Activated CD4-positive, alpha-beta T cell treated with anti-CD3 and anti-CD28 coated beads for 36 hours (primary cell): ENCODE measurements at regions of chr6 and their contacts with region 1.

Region 1: DNA sequence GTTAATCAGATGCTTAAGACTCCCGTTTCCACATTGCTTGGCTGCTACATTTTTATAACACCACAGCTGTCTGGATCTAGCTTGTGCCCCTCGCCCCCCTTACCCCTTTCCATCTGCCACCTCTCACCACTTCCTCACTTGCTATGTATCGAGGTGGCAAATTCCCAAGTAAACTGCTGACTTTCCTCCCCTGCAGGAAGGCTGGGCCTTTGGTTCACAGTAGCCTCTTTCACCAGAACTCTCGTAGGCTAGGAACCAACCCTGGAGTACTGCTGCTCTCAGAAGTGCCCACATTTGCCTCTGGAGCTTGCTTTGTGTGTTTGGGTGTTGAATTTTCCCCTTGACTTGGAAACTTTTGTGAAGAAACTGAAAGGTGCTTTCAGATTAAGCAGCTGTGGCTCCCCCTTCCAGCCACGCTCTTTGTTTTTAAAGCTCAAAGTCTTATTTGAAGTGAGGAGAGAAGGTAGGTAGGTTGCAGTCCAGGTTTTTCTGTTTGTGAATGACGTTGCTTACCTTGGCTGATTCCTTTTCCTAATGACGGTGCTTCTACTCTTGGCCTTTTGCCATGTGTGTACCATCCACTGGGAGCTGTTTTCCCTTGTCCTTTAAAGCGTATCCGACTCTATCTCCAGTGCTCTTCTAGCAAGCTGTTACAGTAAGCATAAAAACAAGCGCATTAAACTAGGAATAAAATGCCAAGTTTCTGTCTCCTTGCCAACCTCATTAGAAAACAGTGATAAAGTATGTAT is 90.4 kb downstream of the CARMIL1 start:
- DNase-seq: peak; percentile 34
- ATAC-seq: peak; percentile 7
- H3K4me3 Mint-ChIP-seq: peak overlapping the region; percentile 43
- H3K27ac Mint-ChIP-seq: peak overlapping the region; percentile 83
- H3K4me1 Mint-ChIP-seq: peaks cover 62% of the 10 kb centered on the region
- H3K27me3 Mint-ChIP-seq: no peaks in the 10 kb centered on the region

Region 2: DNA sequence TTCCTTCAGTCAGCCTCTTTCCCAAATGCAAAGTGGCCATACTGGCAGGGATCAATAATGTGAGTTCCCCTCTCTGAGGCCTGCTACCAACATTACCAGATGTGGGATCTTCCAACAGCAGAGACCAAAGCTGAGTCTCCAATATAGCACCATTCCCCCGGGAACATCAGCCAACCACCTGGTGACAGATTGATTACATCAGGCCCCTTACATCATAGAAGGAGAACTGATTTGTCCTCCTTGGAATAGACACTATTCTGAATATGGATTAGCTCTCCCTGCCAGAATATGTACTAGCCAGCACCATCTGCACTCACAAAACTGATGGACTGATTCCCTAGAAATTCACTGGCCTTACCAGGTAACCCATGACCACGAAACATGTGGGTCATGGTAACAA is 152.3 kb before region 1 on chr6:
- CTCF ChIA-PET with region 1: no interaction called
- POLR2A ChIA-PET with region 1: no interaction called
- intact Hi-C with region 1: no loop called
- DNase-seq: no peak
- ATAC-seq: no peak
- H3K4me3 Mint-ChIP-seq: no peak overlapping the region
- H3K27ac Mint-ChIP-seq: no peak overlapping the region
- H3K4me1 Mint-ChIP-seq: no peaks in the 10 kb centered on the region
- H3K27me3 Mint-ChIP-seq: no peaks in the 10 kb centered on the region

Region 3: DNA sequence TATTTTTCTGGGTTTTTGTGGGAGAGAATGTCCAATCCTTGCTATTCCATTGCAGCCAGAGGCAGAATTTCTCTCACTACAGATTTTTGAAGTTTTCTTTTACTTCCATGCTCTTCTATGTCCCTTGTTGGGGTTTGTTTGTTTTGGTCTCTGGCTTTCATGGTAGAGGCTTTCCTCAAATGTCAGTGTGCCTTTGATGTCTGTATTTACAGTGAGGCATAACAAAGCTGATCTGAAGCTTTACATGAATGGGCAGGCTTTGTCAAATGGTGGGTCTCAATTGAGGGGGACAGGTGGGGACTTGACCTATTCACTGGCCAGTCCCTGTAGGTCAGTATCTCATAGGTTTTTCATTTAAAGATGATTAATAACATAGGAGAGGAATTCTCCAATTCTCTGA is 99.0 kb before region 1 on chr6:
- CTCF ChIA-PET with region 1: interaction called, 4 read pairs
- POLR2A ChIA-PET with region 1: interaction called, 10 read pairs
- intact Hi-C with region 1: loop called in 1 of 2 experiments (anchors 5 kb)
- DNase-seq: no peak
- ATAC-seq: no peak
- H3K4me3 Mint-ChIP-seq: no peak overlapping the region
- H3K27ac Mint-ChIP-seq: no peak overlapping the region
- H3K4me1 Mint-ChIP-seq: peaks cover under 1% of the 10 kb centered on the region
- H3K27me3 Mint-ChIP-seq: peaks cover 19% of the 10 kb centered on the region

Region 4: GRCh38 chr6:25278914-25279747 is 90.5 kb before region 1 on chr6 and contains the start of gene CARMIL1:
- CTCF ChIA-PET with region 1: interaction called, 12 read pairs
- POLR2A ChIA-PET with region 1: no interaction called
- intact Hi-C with region 1: loop called in 1 of 2 experiments (anchors 5 kb)
- DNase-seq: peak; percentile 82
- ATAC-seq: peak; percentile 75
- H3K4me3 Mint-ChIP-seq: peak within 1 kb of the TSS; percentile 82
- H3K27ac Mint-ChIP-seq: peak within 1 kb of the TSS; percentile 79
- H3K4me1 Mint-ChIP-seq: peaks cover 38% of the 10 kb centered on the region
- H3K27me3 Mint-ChIP-seq: peaks cover 5% of the 10 kb centered on the region
- total RNA-seq, gene CARMIL1: 4.5 to 4.9 TPM